Esophagus muscularis mucosa (tissue), 4 donors: ENCODE measurements at regions of chr5 and their contacts with region 1.

Region 1: DNA sequence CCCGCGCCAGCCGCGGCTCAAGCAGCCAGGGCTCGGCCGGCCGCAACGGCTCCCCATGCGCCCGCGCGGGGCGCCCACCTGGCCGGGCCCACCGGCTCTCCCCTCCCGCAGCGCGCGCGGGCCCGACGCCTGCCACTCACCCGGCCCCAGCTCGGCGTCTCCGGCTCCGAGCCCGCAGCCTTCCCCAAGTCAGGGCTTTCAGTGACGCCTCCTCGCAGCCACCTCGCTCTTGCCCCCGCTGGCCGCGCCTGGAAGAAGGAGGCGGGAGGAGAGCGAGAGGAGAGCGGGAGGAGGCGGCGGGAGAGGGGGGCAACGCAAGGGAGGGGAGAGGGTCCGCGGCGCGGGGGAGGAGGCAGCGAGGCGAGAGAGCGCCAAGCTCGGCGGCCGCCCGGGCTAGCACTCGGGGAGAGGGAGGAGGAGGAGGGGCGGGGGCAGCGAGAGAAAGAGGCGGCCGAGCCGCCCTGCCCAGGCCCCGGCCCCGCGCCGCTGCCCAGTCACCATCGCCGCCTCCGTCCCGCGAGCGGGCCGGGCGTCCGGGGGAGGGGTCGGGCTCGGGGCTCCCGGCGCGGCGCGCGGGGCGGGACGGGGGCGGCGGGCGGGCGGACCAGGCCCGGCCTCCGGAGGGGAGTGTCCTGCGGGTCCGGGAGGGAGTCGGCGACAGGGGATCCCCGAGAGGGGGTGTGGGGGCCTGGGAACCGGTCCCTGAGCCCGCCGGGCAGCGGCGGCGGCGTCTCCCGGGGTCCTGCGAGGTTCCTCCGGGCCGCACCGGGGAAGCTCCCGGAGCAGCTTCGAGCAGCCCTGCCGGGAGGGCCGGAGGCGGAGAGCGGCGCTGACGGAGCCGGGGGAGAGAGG is at the start of gene LHFPL2:
- DNase-seq: peak; percentile 94
- H3K4me3 ChIP-seq: peak within 1 kb of the TSS; percentile 76 to 100 (median 86)
- H3K27ac ChIP-seq: peak within 1 kb of the TSS; percentile 96 to 98 (median 98)
- H3K4me1 ChIP-seq: peaks cover 13 to 56% (median 43%) of the 10 kb centered on the region in 4 donors
- H3K27me3 ChIP-seq: no peaks in the 10 kb centered on the region
- CTCF ChIP-seq: peak in 1 of 3 experiments; percentile 0
- EP300 ChIP-seq: no peak
- POLR2A ChIP-seq: peak; percentile 21
- total RNA-seq, gene LHFPL2: 24.1 to 40.9 (median 28.1) TPM

Region 2: GRCh38 chr5:78467752-78468357 is 180.7 kb before region 1 on chr5:
- intact Hi-C with region 1: loop called (anchors 5 kb)
- DNase-seq: no peak
- H3K4me3 ChIP-seq: no peak overlapping the region
- H3K27ac ChIP-seq: no peak overlapping the region
- H3K4me1 ChIP-seq: peaks cover 0 to 6% (median 3%) of the 10 kb centered on the region in 4 donors
- H3K27me3 ChIP-seq: no peaks in the 10 kb centered on the region
- CTCF ChIP-seq: peak; percentile 73 to 85 (median 83)
- EP300 ChIP-seq: no peak
- POLR2A ChIP-seq: no peak

Region 3: GRCh38 chr5:78537821-78538220 is 110.8 kb before region 1 on chr5:
- intact Hi-C with region 1: loop called (anchors 5 kb)
- DNase-seq: no peak
- H3K4me3 ChIP-seq: no peak overlapping the region
- H3K27ac ChIP-seq: no peak overlapping the region
- H3K4me1 ChIP-seq: peaks cover 17 to 60% (median 46%) of the 10 kb centered on the region in 4 donors
- H3K27me3 ChIP-seq: no peaks in the 10 kb centered on the region
- CTCF ChIP-seq: peak; percentile 63 to 71 (median 70)
- EP300 ChIP-seq: no peak
- POLR2A ChIP-seq: no peak

Region 4: DNA sequence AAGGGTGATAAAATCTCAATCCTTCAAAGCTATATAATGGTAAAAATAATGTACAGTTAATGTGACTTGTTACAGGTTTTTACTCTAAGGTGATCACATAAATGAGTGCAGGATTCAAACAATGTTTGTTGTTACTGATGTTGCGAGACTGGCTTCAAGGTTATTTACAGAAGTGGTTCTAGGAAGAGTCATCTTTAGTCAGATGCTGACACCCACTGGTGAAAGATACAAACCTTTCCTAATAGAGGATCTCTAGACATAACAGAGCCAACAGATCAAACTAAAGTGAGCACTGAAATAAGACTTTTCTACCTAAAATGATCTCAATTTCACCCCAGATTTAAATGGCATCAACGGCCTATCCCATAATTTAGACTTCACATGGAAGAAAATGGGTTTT is 316.3 kb after region 1 on chr5:
- intact Hi-C with region 1: loop called (anchors 10 kb)
- DNase-seq: no peak
- H3K4me3 ChIP-seq: no peak overlapping the region
- H3K27ac ChIP-seq: no peak overlapping the region
- H3K4me1 ChIP-seq: no peaks in the 10 kb centered on the region
- H3K27me3 ChIP-seq: no peaks in the 10 kb centered on the region
- CTCF ChIP-seq: peak; percentile 26 to 40 (median 34)
- EP300 ChIP-seq: no peak
- POLR2A ChIP-seq: no peak

Region 5: DNA sequence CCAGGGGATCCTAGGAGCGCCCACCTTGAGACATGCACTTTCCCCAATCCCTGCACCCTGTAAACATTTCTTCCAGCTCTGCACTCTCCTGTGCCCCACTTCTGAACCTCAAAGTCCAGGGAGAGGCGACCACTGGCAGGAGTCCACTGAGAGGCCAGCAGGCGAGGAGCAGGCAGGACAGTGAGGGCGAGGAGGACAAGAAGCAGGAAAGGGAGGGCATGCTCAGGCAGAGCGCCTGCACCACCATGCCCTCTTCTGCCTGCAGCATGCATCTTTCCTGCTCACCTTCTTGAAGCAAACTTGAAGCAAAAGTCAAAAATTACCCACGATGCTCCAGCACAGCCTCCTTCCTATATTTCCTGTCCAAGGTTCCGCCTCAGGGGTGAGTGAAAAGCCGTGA is 326.4 kb after region 1 on chr5:
- intact Hi-C with region 1: no loop called
- DNase-seq: no peak
- H3K4me3 ChIP-seq: no peak overlapping the region
- H3K27ac ChIP-seq: no peak overlapping the region
- H3K4me1 ChIP-seq: peaks cover 23 to 56% (median 47%) of the 10 kb centered on the region in 4 donors
- H3K27me3 ChIP-seq: no peaks in the 10 kb centered on the region
- CTCF ChIP-seq: no peak
- EP300 ChIP-seq: no peak
- POLR2A ChIP-seq: no peak